PC-3 (cell line): ENCODE measurements at regions of chrX and their contacts with region 1.

Region 1: GRCh38 chrX:141341341-141341740 is 99.0 kb upstream of the SPANXC start:
- DNase-seq: peak; percentile 87
- ATAC-seq: peak; percentile 95
- H3K4me3 ChIP-seq: no peak overlapping the region; the same call in 1 of the 2 replicates
- H3K27ac ChIP-seq: peak overlapping the region; percentile 57
- H3K4me1 ChIP-seq: peaks cover 18% of the 10 kb centered on the region
- H3K27me3 ChIP-seq: no peaks in the 10 kb centered on the region
- CTCF ChIP-seq: no peak

Region 2: GRCh38 chrX:141258080-141258479 is 83.3 kb before region 1 on chrX:
- CTCF ChIA-PET with region 1: no interaction called
- POLR2A ChIA-PET with region 1: no interaction called
- intact Hi-C with region 1: no loop called
- DNase-seq: no peak
- ATAC-seq: no peak
- H3K4me3 ChIP-seq: no peak overlapping the region
- H3K27ac ChIP-seq: no peak overlapping the region
- H3K4me1 ChIP-seq: no peaks in the 10 kb centered on the region
- H3K27me3 ChIP-seq: no peaks in the 10 kb centered on the region
- CTCF ChIP-seq: no peak

Region 3: GRCh38 chrX:141468940-141469339 is 127.6 kb after region 1 on chrX:
- CTCF ChIA-PET with region 1: no interaction called
- POLR2A ChIA-PET with region 1: no interaction called
- intact Hi-C with region 1: loop called (anchors 1 kb)
- DNase-seq: peak; percentile 85
- ATAC-seq: peak; percentile 76
- H3K4me3 ChIP-seq: no peak overlapping the region
- H3K27ac ChIP-seq: peak overlapping the region; percentile 85
- H3K4me1 ChIP-seq: peaks cover 33% of the 10 kb centered on the region
- H3K27me3 ChIP-seq: no peaks in the 10 kb centered on the region
- CTCF ChIP-seq: no peak

Region 4: GRCh38 chrX:141839856-141840255 is 498.5 kb after region 1 on chrX:
- CTCF ChIA-PET with region 1: no interaction called
- POLR2A ChIA-PET with region 1: no interaction called
- intact Hi-C with region 1: no loop called
- DNase-seq: peak; percentile 23
- ATAC-seq: no peak
- H3K4me3 ChIP-seq: no peak overlapping the region
- H3K27ac ChIP-seq: no peak overlapping the region
- H3K4me1 ChIP-seq: no peaks in the 10 kb centered on the region
- H3K27me3 ChIP-seq: no peaks in the 10 kb centered on the region
- CTCF ChIP-seq: no peak